Activated CD4-positive, alpha-beta T cell treated with anti-CD3 and anti-CD28 coated beads for 36 hours (primary cell): ENCODE measurements at regions of chr4 and their contacts with region 1.

Region 1: DNA sequence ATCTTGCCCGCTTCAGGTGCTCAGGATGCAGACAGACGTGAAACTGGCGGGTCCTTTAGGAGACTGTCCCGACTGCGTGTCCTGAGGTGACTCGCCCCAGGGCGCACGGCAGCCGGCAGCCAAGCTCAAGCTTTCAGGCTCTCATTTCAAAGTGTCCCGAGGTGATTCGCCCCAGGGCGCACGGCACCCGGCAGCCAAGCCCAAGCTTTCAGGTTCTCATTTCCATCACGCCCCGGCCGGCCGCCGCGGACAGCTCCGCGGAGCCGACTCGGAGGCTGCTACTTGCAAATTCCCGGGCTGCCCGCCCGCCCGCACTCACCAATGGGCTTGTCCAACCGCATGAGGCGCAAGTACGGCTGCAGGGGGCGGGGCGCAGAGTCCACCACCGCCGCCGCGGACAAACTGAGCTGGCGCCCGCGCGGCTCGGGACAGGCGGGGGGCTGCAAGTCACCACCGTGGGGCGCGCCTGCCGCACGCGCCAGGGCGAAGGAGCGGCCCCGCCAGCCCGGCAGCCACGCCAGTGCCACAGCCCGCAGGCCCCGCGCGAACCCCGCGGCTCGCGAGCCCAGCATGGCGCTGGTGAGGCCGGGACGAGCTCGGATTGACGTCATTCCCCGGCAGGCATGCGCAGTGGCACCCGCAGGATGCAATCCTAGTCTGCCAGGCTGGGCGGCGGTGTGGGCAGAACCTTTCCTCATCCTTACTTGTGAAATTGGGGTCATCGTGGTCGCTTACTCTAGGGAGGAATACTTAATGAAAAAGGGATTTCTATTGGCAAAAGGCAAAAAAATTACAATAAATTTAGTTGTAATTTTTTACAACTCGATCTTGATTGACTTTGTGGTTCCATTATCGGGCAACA is at the start of gene COQ2:
- DNase-seq: peak; percentile 97
- ATAC-seq: peak; percentile 92
- H3K4me3 Mint-ChIP-seq: peak within 1 kb of the TSS; percentile 91
- H3K27ac Mint-ChIP-seq: peak within 1 kb of the TSS; percentile 96
- H3K4me1 Mint-ChIP-seq: peaks cover 29% of the 10 kb centered on the region
- H3K27me3 Mint-ChIP-seq: no peaks in the 10 kb centered on the region
- total RNA-seq, gene COQ2: 18.2 to 20.1 TPM

Region 2: GRCh38 chr4:82462415-82462831 is 822.0 kb before region 1 on chr4:
- CTCF ChIA-PET with region 1: no interaction called
- POLR2A ChIA-PET with region 1: no interaction called
- intact Hi-C with region 1: loop called in 1 of 2 experiments (anchors 5 kb)
- DNase-seq: peak; percentile 93
- ATAC-seq: peak; percentile 95
- H3K4me3 Mint-ChIP-seq: no peak overlapping the region
- H3K27ac Mint-ChIP-seq: no peak overlapping the region
- H3K4me1 Mint-ChIP-seq: peaks cover 9% of the 10 kb centered on the region
- H3K27me3 Mint-ChIP-seq: no peaks in the 10 kb centered on the region

Region 3: GRCh38 chr4:82900331-82901128 is 383.9 kb before region 1 on chr4 and contains the start of gene THAP9:
- CTCF ChIA-PET with region 1: interaction called, 5 read pairs
- POLR2A ChIA-PET with region 1: interaction called, 4 read pairs
- intact Hi-C with region 1: loop called in 1 of 2 experiments (anchors 2 kb)
- DNase-seq: peak; percentile 99
- ATAC-seq: peak; percentile 92
- H3K4me3 Mint-ChIP-seq: no peak within 1 kb of the TSS
- H3K27ac Mint-ChIP-seq: no peak within 1 kb of the TSS
- H3K4me1 Mint-ChIP-seq: peaks cover 39% of the 10 kb centered on the region
- H3K27me3 Mint-ChIP-seq: no peaks in the 10 kb centered on the region
- total RNA-seq, gene THAP9: 1.7 to 2.6 TPM

Region 4: DNA sequence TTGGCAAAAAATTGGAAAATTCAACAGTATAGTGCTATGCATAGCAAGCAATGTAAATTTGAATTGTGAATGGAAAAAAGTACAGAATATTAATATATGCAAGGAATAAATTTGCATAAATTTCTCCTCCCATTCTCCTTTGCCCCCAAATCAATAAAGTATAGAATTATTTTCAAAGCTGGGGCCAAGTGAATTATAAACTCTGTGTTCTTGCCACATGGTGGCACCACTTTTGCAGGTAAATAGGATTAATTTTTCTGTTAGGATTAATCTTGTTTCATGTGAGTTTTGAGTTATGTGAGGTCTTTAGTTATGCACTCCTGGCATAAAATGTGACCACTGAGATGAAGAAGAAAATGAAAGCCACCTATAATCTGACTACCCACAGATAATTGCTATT is 229.5 kb before region 1 on chr4:
- CTCF ChIA-PET with region 1: interaction called, 18 read pairs
- POLR2A ChIA-PET with region 1: no interaction called
- intact Hi-C with region 1: no loop called
- DNase-seq: no peak
- ATAC-seq: no peak
- H3K4me3 Mint-ChIP-seq: no peak overlapping the region
- H3K27ac Mint-ChIP-seq: no peak overlapping the region
- H3K4me1 Mint-ChIP-seq: no peaks in the 10 kb centered on the region
- H3K27me3 Mint-ChIP-seq: no peaks in the 10 kb centered on the region

Region 5: DNA sequence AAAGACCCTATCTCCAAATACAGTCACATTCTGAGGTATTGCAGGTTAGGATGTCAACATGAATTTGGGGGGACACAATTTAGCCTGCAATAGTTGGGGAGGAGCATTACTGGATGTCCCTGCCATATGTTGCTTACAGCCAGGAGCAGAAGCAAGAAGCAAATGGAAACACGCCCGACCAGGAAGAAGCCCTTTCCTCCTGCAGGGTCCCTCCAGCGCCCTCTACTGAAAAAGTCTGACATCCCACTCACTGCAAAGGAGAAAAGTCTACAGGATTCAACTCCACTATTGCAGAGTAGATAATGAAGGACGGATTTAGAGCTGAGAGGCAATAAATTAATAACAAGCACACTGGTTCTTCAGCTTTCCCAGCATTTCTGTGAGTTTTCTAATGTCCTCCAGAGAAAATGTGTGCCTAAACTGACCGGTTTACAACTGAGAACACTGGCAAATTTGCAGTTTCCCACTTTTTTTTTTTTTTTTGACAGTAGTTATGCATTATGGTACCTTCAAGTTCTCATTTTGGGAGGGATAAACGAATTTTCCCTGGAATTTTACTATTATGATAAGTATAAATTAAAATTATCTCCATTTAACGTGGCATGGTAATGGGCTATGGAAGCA is 31.5 kb before region 1 on chr4:
- CTCF ChIA-PET with region 1: interaction called, 11 read pairs
- POLR2A ChIA-PET with region 1: no interaction called
- intact Hi-C with region 1: no loop called
- DNase-seq: peak; percentile 80
- ATAC-seq: peak; percentile 91
- H3K4me3 Mint-ChIP-seq: no peak overlapping the region
- H3K27ac Mint-ChIP-seq: no peak overlapping the region
- H3K4me1 Mint-ChIP-seq: peaks cover 24% of the 10 kb centered on the region
- H3K27me3 Mint-ChIP-seq: no peaks in the 10 kb centered on the region

Region 6: GRCh38 chr4:83356899-83357661 is 72.7 kb after region 1 on chr4:
- CTCF ChIA-PET with region 1: interaction called, 11 read pairs
- POLR2A ChIA-PET with region 1: no interaction called
- intact Hi-C with region 1: loop called in 1 of 2 experiments (anchors 1 kb)
- DNase-seq: peak; percentile 52
- ATAC-seq: peak; percentile 91
- H3K4me3 Mint-ChIP-seq: no peak overlapping the region
- H3K27ac Mint-ChIP-seq: peak overlapping the region; percentile 72
- H3K4me1 Mint-ChIP-seq: peaks cover 23% of the 10 kb centered on the region
- H3K27me3 Mint-ChIP-seq: no peaks in the 10 kb centered on the region

Region 7: DNA sequence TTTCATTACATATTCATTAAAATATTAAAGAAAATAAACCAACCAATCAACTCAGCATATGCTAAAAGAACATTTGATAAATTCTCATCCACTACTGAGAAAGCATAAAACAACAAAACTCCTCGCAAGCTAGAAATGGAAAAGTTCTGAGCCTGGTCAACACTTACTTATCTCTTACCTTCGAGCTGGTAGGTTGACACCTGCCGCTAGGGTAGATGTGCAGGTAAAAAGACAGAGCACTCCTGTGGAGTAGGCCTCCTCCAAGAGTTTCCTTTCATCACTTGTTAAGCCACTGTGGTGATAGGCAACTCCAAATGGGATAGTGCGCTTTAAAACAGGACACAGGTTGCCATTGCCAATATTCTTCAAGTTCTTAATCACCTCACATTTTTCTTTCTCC is 152.3 kb after region 1 on chr4:
- CTCF ChIA-PET with region 1: no interaction called
- POLR2A ChIA-PET with region 1: no interaction called
- intact Hi-C with region 1: no loop called
- DNase-seq: no peak
- ATAC-seq: no peak
- H3K4me3 Mint-ChIP-seq: no peak overlapping the region
- H3K27ac Mint-ChIP-seq: no peak overlapping the region
- H3K4me1 Mint-ChIP-seq: peaks cover 3% of the 10 kb centered on the region
- H3K27me3 Mint-ChIP-seq: no peaks in the 10 kb centered on the region